CD4-positive, alpha-beta memory T cell (primary cell): ENCODE measurements at regions of chr5 and their contacts with region 1.

Region 1: GRCh38 chr5:115309751-115310370 is 13.4 kb upstream of the CCDC112 start:
- DNase-seq: peak in 4 of 5 donors; percentile 41 to 55 (median 51)
- H3K4me3 ChIP-seq: no peak overlapping the region
- H3K4me3 Mint-ChIP-seq: no peak overlapping the region
- H3K27ac ChIP-seq: no peak overlapping the region
- H3K27ac Mint-ChIP-seq: no peak overlapping the region
- H3K4me1 ChIP-seq: no peaks in the 10 kb centered on the region
- H3K4me1 Mint-ChIP-seq: no peaks in the 10 kb centered on the region
- H3K27me3 ChIP-seq: peaks cover 3% of the 10 kb centered on the region
- H3K27me3 Mint-ChIP-seq: peaks cover 15 to 28% of the 10 kb centered on the region in 2 donors

Region 2: GRCh38 chr5:115296124-115297022 is 13.5 kb before region 1 on chr5 and contains the start of gene CCDC112:
- CTCF ChIA-PET with region 1: interaction called, 15 read pairs
- POLR2A ChIA-PET with region 1: no interaction called
- intact Hi-C with region 1: no loop called
- DNase-seq: peak; percentile 61 to 72 (median 64)
- H3K4me3 ChIP-seq: peak within 1 kb of the TSS; percentile 5 to 44
- H3K4me3 Mint-ChIP-seq: peak within 1 kb of the TSS; percentile 83 to 91 (median 89)
- H3K27ac ChIP-seq: no peak within 1 kb of the TSS
- H3K27ac Mint-ChIP-seq: peak within 1 kb of the TSS in 6 of 7 donors; percentile 44 to 83 (median 55)
- H3K4me1 ChIP-seq: peaks cover 13% of the 10 kb centered on the region
- H3K4me1 Mint-ChIP-seq: peaks cover 6 to 17% (median 15%) of the 10 kb centered on the region in 4 donors
- H3K27me3 ChIP-seq: no peaks in the 10 kb centered on the region
- H3K27me3 Mint-ChIP-seq: peaks cover 1 to 2% of the 10 kb centered on the region in 2 donors
- total RNA-seq, gene CCDC112: 5.9 to 6.3 TPM

Region 3: DNA sequence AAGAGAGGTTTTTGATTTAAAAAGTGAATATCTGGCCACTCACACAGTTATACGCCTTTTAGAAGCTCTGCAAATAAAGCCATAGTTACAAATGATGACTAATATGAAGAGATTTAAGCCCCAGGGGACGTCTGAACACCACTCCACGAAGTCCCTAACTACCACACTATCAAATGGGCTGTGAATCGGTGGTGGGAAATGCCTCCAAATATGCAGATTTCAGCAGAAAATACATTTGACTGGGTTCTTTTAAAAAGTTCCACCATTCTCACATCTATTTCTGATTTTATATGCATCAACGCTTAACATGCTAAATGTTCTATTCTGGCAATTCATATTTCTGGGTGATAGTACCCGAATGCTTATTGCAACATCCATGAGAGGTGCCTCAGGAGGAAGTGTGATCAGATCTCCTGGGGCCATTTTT is 269.9 kb after region 1 on chr5:
- CTCF ChIA-PET with region 1: interaction called, 417 read pairs
- POLR2A ChIA-PET with region 1: interaction called, 3 read pairs
- intact Hi-C with region 1: loop called (anchors 1 kb)
- DNase-seq: no peak
- H3K4me3 ChIP-seq: no peak overlapping the region
- H3K4me3 Mint-ChIP-seq: no peak overlapping the region
- H3K27ac ChIP-seq: no peak overlapping the region
- H3K27ac Mint-ChIP-seq: no peak overlapping the region
- H3K4me1 ChIP-seq: no peaks in the 10 kb centered on the region
- H3K4me1 Mint-ChIP-seq: no peaks in the 10 kb centered on the region
- H3K27me3 ChIP-seq: no peaks in the 10 kb centered on the region
- H3K27me3 Mint-ChIP-seq: no peaks in the 10 kb centered on the region

Region 4: DNA sequence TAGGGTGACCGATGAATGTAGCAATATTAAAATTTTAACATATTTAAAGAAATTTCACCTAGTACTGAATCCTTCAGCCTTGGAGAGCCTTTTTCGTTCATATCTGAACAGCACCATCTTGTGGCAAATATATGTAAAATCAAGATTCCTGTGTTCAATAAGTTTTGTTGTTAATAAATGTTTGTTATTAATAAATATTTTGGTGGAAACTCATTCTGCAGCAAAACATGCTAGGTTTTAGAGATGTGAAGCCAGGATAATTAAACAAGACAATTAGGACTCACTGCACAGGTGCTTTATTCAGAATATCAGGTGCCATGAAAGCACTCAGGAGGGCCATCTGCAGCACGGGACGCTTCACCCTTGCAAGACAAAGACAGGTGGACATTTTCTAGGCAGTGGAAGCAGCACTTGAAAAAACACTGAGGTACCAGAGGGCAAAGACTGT is 276.8 kb after region 1 on chr5:
- CTCF ChIA-PET with region 1: interaction called, 48 read pairs
- POLR2A ChIA-PET with region 1: no interaction called
- intact Hi-C with region 1: loop called (anchors 1 kb)
- DNase-seq: peak in 4 of 5 donors; percentile 19 to 37 (median 30)
- H3K4me3 ChIP-seq: no peak overlapping the region
- H3K4me3 Mint-ChIP-seq: no peak overlapping the region
- H3K27ac ChIP-seq: no peak overlapping the region
- H3K27ac Mint-ChIP-seq: no peak overlapping the region
- H3K4me1 ChIP-seq: no peaks in the 10 kb centered on the region
- H3K4me1 Mint-ChIP-seq: no peaks in the 10 kb centered on the region
- H3K27me3 ChIP-seq: no peaks in the 10 kb centered on the region
- H3K27me3 Mint-ChIP-seq: no peaks in the 10 kb centered on the region

Region 5: DNA sequence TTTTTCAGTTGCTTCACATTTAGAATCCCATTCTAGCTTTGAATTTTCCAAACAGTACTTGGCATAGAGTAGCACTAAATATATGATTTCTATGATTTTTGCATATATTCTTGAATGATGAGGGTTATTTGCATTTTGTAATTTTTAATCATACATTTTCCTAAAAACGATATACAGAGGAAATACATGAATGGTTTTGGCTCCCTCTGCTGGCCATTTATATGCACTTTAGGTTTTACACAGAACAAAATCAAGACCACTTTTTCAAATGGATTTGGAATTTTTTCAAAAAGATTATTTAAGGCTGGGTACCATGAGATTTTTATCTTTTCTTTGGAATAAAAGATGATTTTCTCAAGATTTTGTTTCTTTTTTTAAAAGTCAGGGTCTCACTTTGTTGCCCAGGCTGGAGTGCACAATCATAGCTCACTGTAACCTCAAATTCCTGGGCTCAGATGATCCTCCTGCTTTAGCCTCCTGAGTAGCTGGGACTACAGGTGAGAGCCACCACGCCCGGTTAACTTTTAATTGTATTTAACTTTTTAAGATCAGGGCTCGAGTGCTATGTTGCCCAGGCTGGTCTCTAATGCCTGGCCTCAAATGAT is 758.3 kb after region 1 on chr5:
- CTCF ChIA-PET with region 1: interaction called, 8 read pairs
- POLR2A ChIA-PET with region 1: no interaction called
- intact Hi-C with region 1: loop called (anchors 1 kb)
- DNase-seq: peak in 4 of 5 donors; percentile 32 to 46 (median 34)
- H3K4me3 ChIP-seq: no peak overlapping the region
- H3K4me3 Mint-ChIP-seq: no peak overlapping the region
- H3K27ac ChIP-seq: no peak overlapping the region
- H3K27ac Mint-ChIP-seq: no peak overlapping the region
- H3K4me1 ChIP-seq: no peaks in the 10 kb centered on the region
- H3K4me1 Mint-ChIP-seq: no peaks in the 10 kb centered on the region
- H3K27me3 ChIP-seq: peaks cover 13% of the 10 kb centered on the region
- H3K27me3 Mint-ChIP-seq: peaks cover 16 to 22% of the 10 kb centered on the region in 2 donors